Sciatic nerve (tissue), 2 donors: ENCODE measurements at regions of chr11 and their contacts with region 1.

Region 1: DNA sequence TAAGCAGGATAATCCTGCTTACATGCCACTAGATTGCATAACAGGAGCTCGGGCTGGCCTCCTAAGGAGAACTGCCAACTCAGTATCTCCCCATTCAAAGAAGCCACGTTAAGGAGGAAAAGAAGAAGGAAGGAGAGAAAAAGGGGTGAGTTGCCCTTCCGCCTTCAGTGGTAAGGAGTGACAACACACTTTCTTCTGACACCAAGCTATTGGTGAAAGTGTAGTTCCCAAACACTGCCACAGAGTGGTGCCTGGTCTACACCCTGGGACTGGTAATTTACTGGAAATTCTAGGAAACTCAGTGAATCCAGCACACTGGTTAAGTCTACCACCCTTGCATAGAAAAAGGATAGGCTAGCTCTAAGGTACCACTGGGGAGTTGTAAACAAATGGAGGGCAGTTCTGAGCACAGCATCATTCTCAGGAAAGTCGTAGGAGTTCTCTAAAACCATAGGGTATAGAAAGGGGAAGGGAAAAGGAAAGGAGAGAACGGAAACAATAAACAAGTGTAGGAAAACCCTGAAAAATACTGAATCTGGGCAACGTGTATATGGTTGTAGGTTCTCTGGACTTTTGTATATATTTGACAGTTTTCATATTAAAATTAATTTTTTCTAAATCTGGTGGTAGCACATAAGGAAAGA is 58.2 kb downstream of the RRAS2 start:
- DNase-seq: peak; percentile 63
- ATAC-seq: peak; percentile 95

Region 2: GRCh38 chr11:14454861-14455632 is 154.3 kb after region 1 on chr11:
- intact Hi-C with region 1: loop called (anchors 10 kb)
- DNase-seq: no peak
- ATAC-seq: peak; percentile 50